ENCODE measurements at regions of chr12 and their contacts with region 1.

Region 1: DNA sequence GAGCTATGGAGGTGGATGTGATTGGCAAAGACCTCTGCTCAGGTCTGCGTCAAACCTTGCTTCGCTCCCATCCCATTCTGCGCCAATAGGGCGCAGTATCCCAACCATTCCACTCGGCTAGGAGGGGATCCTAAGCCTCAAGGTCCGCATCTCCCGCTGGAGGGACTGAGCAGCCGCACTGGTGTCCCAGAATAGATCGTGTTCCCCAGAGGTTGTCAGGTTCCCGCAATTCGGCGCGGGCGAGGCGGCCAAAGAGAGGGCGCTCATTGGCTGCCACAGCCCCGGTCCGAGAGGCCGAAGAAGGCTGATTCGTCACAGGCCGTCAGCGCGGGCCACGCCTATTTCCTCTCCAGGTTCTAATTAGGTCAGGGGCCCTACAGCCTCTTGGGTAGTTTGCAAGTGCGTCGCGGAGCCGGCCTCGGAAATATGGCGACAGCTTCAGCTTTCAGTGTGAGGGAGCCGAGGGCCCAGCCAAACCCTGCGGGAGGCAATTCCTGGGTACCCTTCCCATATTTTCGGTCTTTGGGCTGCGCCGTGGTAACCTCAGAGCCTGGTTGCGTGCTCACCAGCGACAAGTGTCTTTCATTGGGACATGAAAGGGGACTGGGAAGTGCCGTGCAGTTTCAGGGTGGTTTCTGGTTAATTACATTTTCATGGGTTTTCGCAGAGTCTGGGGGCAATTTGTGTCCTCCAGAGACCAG is 5.0 kb downstream of the OR10AD1 start:
- DNase-seq: peak; percentile 93 to 98
- ATAC-seq: peak; percentile 93 to 96
- H3K4me3 ChIP-seq: peak overlapping the region; percentile 66
- H3K27ac ChIP-seq: peak overlapping the region; percentile 86 to 93
- H3K4me1 ChIP-seq: peaks cover 50% of the 10 kb centered on the region
- CTCF ChIP-seq: no peak
- EP300 ChIP-seq: no peak
- POLR2A ChIP-seq: peak; percentile 77
- RAD21 ChIP-seq: no peak

Region 2: DNA sequence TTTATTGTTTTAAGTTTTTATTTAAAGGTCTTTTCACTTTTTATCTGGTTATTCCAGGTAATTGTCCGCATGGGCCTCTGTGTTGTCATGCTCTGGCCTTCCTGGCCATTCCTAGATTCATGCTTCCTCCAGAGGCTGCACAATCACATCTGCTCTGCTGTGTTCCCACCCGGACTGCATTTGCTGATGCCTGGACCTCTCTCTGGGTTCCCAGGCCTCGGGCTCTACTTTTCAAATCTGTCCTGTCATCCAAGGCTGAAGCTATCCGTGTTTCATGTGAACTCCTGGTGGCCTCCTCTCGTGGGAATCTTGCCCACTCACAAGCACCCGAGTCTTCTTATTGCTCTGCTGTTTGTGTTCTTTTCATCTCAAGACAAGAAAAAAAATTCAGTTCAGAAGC is 277.2 kb before region 1 on chr12:
- CTCF ChIA-PET with region 1: no interaction called
- POLR2A ChIA-PET with region 1: no interaction called
- DNase-seq: no peak
- ATAC-seq: no peak
- H3K4me3 ChIP-seq: no peak overlapping the region
- H3K27ac ChIP-seq: no peak overlapping the region
- H3K4me1 ChIP-seq: no peaks in the 10 kb centered on the region
- CTCF ChIP-seq: no peak
- EP300 ChIP-seq: no peak
- POLR2A ChIP-seq: no peak
- RAD21 ChIP-seq: no peak

Region 3: GRCh38 chr12:48183091-48183875 is 14.8 kb before region 1 on chr12 and contains the start of gene CCDC184:
- CTCF ChIA-PET with region 1: interaction called, 63 read pairs
- POLR2A ChIA-PET with region 1: interaction called, 5 read pairs
- DNase-seq: peak; percentile 83 to 90
- ATAC-seq: peak; percentile 85 to 88
- H3K4me3 ChIP-seq: peak within 1 kb of the TSS; percentile 64
- H3K27ac ChIP-seq: peak within 1 kb of the TSS; percentile 64 to 84
- H3K4me1 ChIP-seq: peaks cover 7% of the 10 kb centered on the region; the same call in 2 of the 3 replicates
- CTCF ChIP-seq: peak; percentile 42
- EP300 ChIP-seq: no peak
- POLR2A ChIP-seq: peak; percentile 47
- RAD21 ChIP-seq: no peak; a peak in 1 of 5 replicates
- polyA plus RNA-seq, gene CCDC184: 2.4 and 2.7 TPM in 2 replicates

Region 4: DNA sequence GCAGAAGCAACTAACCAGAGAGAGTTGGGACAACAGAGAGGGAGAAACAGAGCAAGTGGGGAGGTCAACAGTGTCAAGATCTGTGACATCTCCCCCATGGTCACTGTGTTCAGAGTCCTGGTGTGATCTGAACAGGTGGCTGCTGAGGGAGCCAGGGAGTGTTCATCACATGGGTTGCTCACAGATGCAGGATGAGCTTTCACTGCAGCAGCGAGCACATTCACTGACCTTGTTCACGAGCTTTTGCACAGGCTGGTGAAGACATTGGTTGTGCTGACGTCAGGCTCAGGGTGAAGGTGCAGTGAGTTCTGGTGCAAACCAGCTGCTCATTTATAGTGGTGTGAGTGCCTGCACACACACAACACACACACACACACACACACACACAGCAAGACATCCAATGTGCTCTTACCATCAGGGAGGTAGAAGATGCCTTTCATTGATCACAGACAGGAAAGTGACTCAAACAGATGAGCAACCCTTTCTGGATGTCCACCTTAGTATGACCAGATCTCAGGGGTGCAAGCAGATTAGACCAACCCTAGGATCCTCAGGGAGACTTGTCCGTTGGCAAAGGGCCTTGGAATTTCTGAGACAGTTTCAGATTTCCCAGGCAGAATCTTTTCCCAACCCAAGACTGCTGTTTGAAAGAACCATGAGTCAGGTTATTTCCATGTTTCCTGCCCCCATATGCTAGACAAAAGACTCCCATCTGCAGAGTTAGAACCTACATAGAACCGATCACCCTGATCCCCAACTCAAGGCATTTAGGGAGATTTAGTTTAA is 49.3 kb after region 1 on chr12:
- CTCF ChIA-PET with region 1: no interaction called
- POLR2A ChIA-PET with region 1: no interaction called
- DNase-seq: no peak
- ATAC-seq: no peak; a peak in 1 of 6 replicates
- H3K4me3 ChIP-seq: no peak overlapping the region
- H3K27ac ChIP-seq: no peak overlapping the region
- H3K4me1 ChIP-seq: no peaks in the 10 kb centered on the region
- CTCF ChIP-seq: no peak
- EP300 ChIP-seq: no peak
- POLR2A ChIP-seq: no peak
- RAD21 ChIP-seq: no peak